ENCODE measurements at regions of chr11 and their contacts with region 1.

Region 1: DNA sequence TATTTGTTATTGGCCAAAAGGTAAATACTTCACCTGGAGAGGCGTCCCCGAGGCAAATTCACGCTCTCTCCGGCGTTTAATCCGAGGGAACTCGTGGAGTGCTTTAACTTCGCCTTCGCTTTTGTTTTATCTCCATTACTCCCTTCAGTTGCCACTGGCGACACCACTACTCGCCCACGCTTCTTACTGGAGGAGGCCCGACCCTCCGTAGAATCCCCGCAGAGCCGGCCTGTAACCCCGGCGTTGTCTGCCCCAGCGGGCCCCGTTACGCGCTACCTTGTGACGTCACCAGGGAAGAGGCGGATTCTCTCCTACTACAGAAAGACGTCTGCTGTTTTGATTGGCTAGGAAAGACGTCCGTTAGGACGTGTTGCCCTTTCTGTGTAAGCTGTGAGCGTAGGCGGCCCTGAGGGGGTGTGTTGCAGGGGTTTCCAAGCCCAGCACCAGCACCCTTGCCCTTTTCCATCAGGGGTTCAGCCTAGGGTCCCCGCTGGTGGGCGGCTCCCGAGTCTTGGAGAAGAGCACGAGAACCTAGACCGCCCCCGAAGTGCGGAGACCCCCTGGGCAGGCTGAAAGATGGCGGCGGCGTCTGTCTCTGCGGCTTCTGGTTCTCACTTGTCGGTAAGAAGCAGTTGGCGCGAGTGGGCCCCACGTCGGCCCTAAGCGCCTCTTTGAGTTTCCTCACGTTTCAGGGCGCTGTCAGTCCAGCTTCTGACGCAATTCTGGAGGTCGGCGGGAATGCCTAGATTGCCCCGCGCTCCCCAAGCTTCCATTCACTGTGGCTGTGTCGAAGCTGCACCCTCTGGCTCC is at the start of gene CEP57:
- DNase-seq: peak; percentile 86 to 98 (median 93)
- ATAC-seq: peak; percentile 67 to 70 (median 69)
- H3K4me3 ChIP-seq: peak within 1 kb of the TSS; percentile 92 to 95
- H3K4me3 Mint-ChIP-seq: peak within 1 kb of the TSS; percentile 96 to 99 (median 99)
- H3K27ac ChIP-seq: peak within 1 kb of the TSS; percentile 99
- H3K27ac Mint-ChIP-seq: peak within 1 kb of the TSS; percentile 100
- H3K4me1 ChIP-seq: peaks cover 19 to 23% of the 10 kb centered on the region in 2 experiments
- H3K4me1 Mint-ChIP-seq: peaks cover 56 to 69% (median 68%) of the 10 kb centered on the region in 3 donors
- H3K27me3 ChIP-seq: no peaks in the 10 kb centered on the region
- H3K27me3 Mint-ChIP-seq: no peaks in the 10 kb centered on the region
- total RNA-seq, gene CEP57: 57.6 to 69.6 (median 65.0) TPM

Region 2: DNA sequence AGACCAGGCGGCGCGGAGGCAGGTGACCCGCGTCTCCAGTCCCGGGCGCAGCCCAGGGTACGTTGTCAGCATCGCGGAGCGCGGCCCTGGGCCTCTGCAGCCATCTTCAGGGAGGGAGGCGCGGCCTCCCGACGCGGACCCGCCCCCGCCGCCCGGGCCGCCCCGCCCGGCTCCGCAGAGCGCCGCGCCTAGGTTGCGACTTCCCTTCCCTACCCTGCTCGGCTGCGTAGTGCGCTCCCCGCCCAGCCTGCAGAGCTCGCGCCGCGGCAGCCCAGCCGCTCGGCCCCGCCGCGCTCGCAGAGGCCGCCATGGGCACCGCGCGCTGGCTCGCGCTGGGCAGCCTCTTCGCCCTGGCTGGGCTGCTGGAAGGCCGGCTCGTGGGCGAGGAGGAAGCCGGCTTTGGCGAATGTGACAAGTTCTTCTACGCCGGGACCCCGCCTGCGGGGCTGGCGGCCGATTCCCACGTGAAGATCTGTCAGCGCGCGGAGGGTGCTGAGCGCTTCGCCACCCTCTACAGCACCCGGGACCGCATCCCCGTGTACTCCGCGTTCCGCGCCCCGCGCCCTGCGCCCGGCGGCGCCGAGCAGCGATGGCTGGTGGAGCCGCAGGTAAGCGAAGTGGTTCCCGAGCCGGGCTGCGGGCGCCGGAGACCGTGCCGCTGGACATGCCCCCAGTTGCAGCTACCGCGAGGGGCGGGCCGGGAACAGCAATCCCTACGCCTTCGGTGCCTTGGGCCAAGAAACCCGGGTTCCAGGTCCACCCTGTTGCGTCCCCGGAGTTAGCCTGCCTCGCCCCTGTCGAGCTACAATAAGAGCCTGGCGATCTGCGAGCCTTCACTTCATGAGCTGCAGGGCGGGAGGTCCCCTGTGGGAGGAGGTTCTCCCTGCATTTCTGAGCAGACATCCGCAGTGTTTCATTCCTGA is 700.4 kb before region 1 on chr11 and contains the start of gene ENDOD1:
- CTCF ChIA-PET with region 1: interaction called in 1 of 2 experiments, 12 read pairs
- POLR2A ChIA-PET with region 1: interaction called, 4 to 5 read pairs
- DNase-seq: peak; percentile 75 to 92 (median 83)
- ATAC-seq: peak; percentile 94 to 98 (median 95)
- H3K4me3 ChIP-seq: peak within 1 kb of the TSS; percentile 67 to 76
- H3K4me3 Mint-ChIP-seq: peak within 1 kb of the TSS; percentile 82 to 90 (median 90)
- H3K27ac ChIP-seq: peak within 1 kb of the TSS; percentile 80
- H3K27ac Mint-ChIP-seq: peak within 1 kb of the TSS; percentile 89 to 99
- H3K4me1 ChIP-seq: peaks cover 5 to 31% of the 10 kb centered on the region in 2 experiments
- H3K4me1 Mint-ChIP-seq: peaks cover 37 to 59% (median 50%) of the 10 kb centered on the region in 3 donors
- H3K27me3 ChIP-seq: no peaks in the 10 kb centered on the region
- H3K27me3 Mint-ChIP-seq: no peaks in the 10 kb centered on the region
- total RNA-seq, gene ENDOD1: 7.4 to 13.1 (median 9.8) TPM

Region 3: DNA sequence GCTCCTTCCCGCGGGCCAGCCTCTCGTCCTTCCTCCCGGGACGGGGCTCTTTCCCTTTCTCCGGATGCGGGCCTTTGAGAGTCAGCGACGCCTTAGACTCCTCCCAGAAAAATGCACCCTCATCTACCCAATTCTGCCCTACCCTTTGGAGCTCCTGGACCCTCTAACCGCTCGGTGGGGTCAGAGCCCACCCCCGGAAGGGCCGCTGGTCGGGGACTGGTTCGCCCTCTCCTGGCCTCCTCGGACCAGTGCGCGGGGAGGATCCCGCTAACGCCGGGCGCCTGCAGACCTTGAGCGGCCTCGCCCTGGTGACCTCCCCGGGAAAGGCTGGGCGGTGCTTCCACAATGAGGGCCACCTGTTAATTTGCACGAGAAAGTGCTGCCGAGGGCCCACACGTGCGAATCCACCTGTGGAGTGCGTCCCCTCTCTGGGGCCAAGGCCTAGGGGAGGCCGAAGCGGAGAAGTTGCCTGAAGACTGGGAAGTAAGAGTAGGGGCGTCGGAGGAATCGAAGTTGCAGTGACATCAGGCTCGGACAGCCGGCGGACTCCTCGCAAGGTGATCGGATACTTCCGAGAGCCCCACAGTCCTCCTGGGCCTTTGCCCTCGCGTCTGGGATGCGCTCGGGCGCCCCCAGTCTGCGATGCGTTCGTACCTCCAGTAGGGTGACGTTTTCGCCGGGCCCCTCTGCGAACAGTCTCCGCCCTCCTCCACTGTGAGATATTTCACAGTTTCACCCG is 639.2 kb before region 1 on chr11:
- CTCF ChIA-PET with region 1: interaction called, 4 to 16 read pairs
- POLR2A ChIA-PET with region 1: interaction called, 3 to 7 read pairs
- DNase-seq: peak; percentile 79 to 96 (median 89)
- ATAC-seq: peak; percentile 90 to 94 (median 92)
- H3K4me3 ChIP-seq: peak overlapping the region; percentile 90 to 92
- H3K4me3 Mint-ChIP-seq: peak overlapping the region; percentile 82 to 91 (median 84)
- H3K27ac ChIP-seq: peak overlapping the region; percentile 87
- H3K27ac Mint-ChIP-seq: peak overlapping the region; percentile 99
- H3K4me1 ChIP-seq: peaks cover 11 to 43% of the 10 kb centered on the region in 2 experiments
- H3K4me1 Mint-ChIP-seq: peaks cover 35 to 40% (median 39%) of the 10 kb centered on the region in 3 donors
- H3K27me3 ChIP-seq: peaks cover 0 to 11% of the 10 kb centered on the region in 2 experiments
- H3K27me3 Mint-ChIP-seq: peaks cover 6% of the 10 kb centered on the region in 2 donors

Region 4: DNA sequence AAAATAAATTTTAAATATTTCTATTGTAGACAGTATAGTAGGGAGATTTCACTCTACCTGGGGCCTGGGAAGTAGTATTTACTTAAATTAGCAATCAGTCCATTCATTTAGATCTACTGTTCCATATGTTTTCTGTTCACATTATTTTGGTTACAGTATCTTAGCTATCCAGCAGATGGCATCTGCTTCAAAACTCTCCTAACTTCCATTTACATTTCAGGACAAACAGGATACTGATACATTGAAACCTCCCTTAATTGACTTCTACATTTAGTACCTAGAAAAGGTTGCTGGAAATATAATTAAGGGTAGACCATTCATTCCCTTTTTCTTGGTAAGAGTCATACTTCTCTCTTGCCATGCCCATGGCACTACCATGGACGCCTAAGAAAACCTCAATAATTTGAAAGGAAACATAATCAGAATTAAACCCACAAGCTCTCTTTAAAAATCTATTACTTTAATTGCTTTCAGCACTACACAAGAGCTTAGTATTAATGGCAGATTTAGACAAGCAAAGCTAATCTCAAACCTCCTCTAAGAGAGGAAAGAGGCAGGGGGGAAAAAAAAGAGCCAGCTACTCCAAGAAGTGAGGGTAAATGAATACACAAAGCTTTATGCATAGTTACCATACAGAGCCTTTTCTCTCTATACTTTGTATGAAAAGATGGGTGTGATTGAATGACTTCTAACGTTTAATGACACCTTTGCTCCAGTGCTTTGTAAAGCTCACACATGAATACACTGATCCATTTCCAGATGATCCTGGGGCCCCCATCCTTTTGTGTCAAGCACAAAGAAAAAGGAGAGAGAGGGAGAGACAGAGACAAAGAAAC is 264.8 kb after region 1 on chr11:
- CTCF ChIA-PET with region 1: no interaction called
- POLR2A ChIA-PET with region 1: no interaction called
- DNase-seq: peak in 1 of 35 experiments; percentile 53
- ATAC-seq: peak; percentile 43 to 64 (median 52)
- H3K4me3 ChIP-seq: no peak overlapping the region
- H3K4me3 Mint-ChIP-seq: no peak overlapping the region
- H3K27ac ChIP-seq: no peak overlapping the region
- H3K27ac Mint-ChIP-seq: peak overlapping the region; percentile 69 to 76
- H3K4me1 ChIP-seq: peaks cover 0 to 5% of the 10 kb centered on the region in 2 experiments
- H3K4me1 Mint-ChIP-seq: peaks cover 58 to 67% (median 62%) of the 10 kb centered on the region in 3 donors
- H3K27me3 ChIP-seq: no peaks in the 10 kb centered on the region
- H3K27me3 Mint-ChIP-seq: no peaks in the 10 kb centered on the region